ENCODE measurements at regions of chr20 and their contacts with region 1.

Region 1: GRCh38 chr20:7980332-7981046 is 39.1 kb downstream of the TMX4 start:
- DNase-seq: no peak
- H3K4me3 ChIP-seq: no peak overlapping the region
- CTCF ChIP-seq: peak; percentile 47

Region 2: DNA sequence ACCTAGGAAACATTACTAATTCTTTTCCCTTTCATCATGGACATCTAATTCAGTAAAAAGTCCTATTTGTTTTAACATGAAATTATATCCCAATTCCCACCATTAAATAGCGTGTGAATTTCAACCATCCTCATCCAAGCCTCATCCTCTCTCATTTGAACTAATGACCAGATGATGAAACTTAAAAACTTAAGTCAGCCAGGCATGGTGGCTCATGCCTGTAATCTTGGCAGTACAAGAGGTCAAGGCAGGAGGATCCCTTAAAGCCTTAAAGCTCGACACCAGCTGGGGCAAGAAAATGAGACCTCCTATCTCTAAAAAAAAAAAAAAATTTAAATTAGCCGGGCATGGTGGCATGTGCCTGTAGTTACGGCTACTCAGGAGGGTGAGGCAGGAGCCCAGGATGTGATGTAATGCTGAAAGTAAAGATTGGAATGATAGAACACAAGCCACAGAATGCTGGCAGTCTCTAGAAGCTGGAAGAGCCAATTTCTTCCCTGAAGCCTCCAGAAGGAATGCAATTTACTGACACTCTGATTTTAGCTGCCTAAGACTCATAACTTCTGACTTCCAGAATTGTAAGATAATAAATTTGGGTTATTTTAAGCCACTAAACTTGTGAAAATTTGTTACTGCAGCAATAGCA is 13.2 kb before region 1 on chr20:
- CTCF ChIA-PET with region 1: interaction called, 10 read pairs
- POLR2A ChIA-PET with region 1: no interaction called
- DNase-seq: peak; percentile 54
- H3K4me3 ChIP-seq: no peak overlapping the region
- CTCF ChIP-seq: no peak

Region 3: GRCh38 chr20:8002056-8002455 is 21.6 kb after region 1 on chr20:
- CTCF ChIA-PET with region 1: interaction called, 11 read pairs
- POLR2A ChIA-PET with region 1: no interaction called
- DNase-seq: no peak
- H3K4me3 ChIP-seq: no peak overlapping the region
- CTCF ChIP-seq: no peak

Region 4: DNA sequence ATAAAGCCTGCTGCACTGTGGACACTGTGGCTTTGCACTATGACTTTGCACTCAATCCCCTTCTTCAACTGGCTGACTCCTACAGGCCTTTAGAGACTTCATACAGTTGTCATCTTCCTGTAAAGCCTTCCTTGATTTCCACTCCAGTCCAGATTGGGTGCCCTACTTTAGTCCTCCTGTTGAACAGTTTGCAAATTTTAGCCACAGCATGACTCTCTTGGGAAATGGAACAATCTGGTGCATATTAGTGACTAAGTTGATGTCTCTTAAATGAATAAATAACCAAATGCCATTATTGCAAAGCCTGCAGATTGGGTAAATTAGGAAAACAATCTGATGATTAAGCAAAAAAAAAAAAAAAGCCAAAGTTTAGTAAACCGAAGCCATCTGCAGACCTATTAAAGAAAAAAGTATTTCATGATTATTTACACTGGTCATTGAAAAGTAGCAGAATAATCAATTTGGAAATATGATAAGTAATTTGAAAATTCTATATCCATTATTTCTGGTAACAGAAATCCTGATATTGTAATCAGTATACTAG is 1101.0 kb after region 1 on chr20:
- CTCF ChIA-PET with region 1: no interaction called
- POLR2A ChIA-PET with region 1: no interaction called
- DNase-seq: no peak
- H3K4me3 ChIP-seq: no peak overlapping the region
- CTCF ChIP-seq: no peak

Measured in AG04449 (cell line).